ENCODE measurements at regions of chr9 and their contacts with region 1.

Region 1: GRCh38 chr9:107489687-107490605 is at the start of gene KLF4:
- DNase-seq: peak; percentile 92 to 97
- H3K4me3 ChIP-seq: peak within 1 kb of the TSS; percentile 64 to 85 (median 68)
- H3K27ac ChIP-seq: peak within 1 kb of the TSS; percentile 92 to 97 (median 94)
- H3K4me1 ChIP-seq: peaks cover 9 to 63% (median 57%) of the 10 kb centered on the region in 4 donors
- H3K27me3 ChIP-seq: peaks cover 0 to 50% (median 21%) of the 10 kb centered on the region in 3 donors
- CTCF ChIP-seq: no peak
- EP300 ChIP-seq: no peak
- POLR2A ChIP-seq: peak in 1 of 4 donors; percentile 22
- total RNA-seq, gene KLF4: 34.8 to 323 (median 58.6) TPM

Region 2: DNA sequence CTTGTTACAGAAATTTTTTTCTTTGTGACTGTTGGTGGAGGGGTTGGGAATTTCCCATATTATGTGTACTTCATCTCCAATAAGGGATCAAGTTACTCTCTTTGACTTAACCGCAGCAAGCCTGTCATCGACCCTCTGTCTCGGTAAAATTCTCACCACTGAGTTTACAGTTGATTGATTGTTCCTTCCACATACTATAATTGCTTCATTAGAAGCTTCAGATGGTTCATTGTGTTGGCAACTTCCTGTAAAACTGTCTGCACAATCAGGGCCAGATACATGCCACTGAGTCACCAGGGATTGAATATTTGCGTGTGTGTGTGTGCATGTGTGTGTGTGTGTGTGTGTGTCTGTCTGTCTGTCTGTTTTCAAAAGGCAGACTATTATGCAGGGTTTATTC is 450.4 kb before region 1 on chr9:
- intact Hi-C with region 1: no loop called
- DNase-seq: no peak
- H3K4me3 ChIP-seq: no peak overlapping the region
- H3K27ac ChIP-seq: no peak overlapping the region
- H3K4me1 ChIP-seq: no peaks in the 10 kb centered on the region
- H3K27me3 ChIP-seq: no peaks in the 10 kb centered on the region
- CTCF ChIP-seq: no peak
- EP300 ChIP-seq: no peak
- POLR2A ChIP-seq: no peak

Region 3: DNA sequence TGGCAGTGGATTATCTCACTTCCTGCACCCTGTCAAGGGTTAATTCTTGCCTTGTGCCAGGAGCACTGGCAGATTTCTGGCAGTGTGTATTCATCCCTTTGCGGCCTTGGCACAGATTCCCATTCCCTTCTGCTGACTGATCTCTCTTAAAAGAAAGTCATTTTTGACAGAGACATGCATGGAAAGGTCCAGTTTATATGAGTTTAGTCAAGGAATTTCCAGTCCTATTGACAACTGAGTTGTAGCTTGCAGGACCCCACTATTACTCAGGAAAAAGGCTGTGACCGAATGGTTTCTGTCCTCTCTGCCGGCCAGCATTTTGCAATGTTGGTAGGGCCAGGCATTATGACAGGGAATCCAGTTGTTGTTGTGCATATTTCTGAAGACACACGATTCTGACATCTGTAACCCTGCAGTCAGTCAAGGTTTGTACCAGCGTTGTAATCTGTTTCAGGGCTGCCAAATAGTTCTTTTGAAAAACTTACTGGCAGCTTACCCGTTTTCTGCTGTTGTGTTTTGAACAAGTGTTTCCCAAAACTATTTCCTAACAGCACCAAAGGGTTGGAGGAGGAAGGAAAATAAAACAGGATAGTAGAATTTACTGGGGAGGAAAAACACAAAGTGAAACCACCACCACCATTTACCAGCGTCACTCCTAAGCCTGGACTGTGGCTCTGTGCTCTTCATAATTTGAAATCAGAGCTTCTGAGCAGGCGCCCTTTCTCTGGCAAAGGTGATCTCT is 243.0 kb after region 1 on chr9:
- intact Hi-C with region 1: loop called (anchors 10 kb)
- DNase-seq: peak; percentile 49 to 51
- H3K4me3 ChIP-seq: peak overlapping the region in 1 of 4 donors; percentile 22
- H3K27ac ChIP-seq: peak overlapping the region; percentile 28 to 90 (median 83)
- H3K4me1 ChIP-seq: peaks cover 8 to 40% (median 18%) of the 10 kb centered on the region in 4 donors
- H3K27me3 ChIP-seq: no peaks in the 10 kb centered on the region
- CTCF ChIP-seq: no peak
- EP300 ChIP-seq: peak; percentile 8
- POLR2A ChIP-seq: no peak

Region 4: GRCh38 chr9:108272349-108272899 is 782.5 kb after region 1 on chr9:
- intact Hi-C with region 1: loop called (anchors 10 kb)
- DNase-seq: peak; percentile 62 to 77
- H3K4me3 ChIP-seq: peak overlapping the region; percentile 13 to 37 (median 23)
- H3K27ac ChIP-seq: peak overlapping the region; percentile 80 to 91 (median 82)
- H3K4me1 ChIP-seq: peaks cover 9 to 28% (median 24%) of the 10 kb centered on the region in 4 donors
- H3K27me3 ChIP-seq: no peaks in the 10 kb centered on the region
- CTCF ChIP-seq: peak in 5 of 7 experiments; percentile 26 to 60 (median 49)
- EP300 ChIP-seq: no peak
- POLR2A ChIP-seq: no peak

Measured in stomach (tissue), 19 donors.